ENCODE measurements at regions of chr5 and their contacts with region 1.

Region 1: DNA sequence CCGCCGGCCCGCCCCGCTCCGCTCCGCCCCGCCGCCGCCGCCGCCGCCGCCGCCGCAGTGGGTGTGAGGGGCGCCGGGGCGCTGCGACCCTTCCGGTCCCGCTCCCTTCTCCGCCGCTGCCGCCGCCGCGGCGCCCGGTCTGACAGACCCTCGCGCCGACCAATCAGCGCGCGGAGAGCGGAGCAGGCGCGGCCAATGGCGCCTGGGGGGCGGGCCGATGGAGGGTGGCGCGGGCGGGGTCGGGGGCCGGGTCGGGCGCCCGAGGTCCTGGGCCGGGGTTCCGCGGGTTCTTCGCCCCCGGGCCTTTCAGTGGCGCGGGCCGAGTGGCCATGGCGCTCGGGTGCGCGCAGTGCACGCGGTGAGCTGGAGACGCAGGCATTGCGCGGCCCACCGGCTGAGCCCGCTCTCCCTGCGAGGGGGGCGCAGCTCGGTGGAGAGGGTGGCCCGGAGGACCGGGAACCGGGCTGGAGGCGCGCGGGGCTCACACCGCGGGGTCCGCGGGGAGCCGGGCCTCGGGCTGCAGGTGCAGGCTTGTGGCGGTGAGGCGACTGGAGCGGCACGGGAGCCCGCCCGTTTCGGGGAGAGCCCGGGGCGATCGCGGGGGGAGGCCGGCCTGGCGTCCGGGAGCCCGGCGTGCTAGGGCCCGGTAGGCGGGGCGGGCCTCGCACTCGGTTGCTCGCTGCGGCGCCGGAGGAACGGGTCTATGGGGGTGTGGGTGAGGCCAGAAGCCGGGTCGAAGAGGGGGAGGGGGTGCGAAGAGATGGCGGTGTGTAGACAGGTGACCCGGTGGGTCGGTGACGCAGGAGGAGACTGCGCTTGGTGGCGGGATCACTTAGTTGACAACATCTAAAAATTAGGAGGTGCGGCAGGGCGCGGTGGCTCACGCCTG is at the start of gene MAPK9:
- DNase-seq: peak; percentile 62
- ATAC-seq: peak; percentile 83
- H3K4me3 ChIP-seq: peak within 1 kb of the TSS; percentile 85 to 94 (median 91)
- H3K27ac ChIP-seq: peak within 1 kb of the TSS; percentile 87
- H3K4me1 ChIP-seq: peaks cover 60% of the 10 kb centered on the region
- H3K27me3 ChIP-seq: no peaks in the 10 kb centered on the region
- CTCF ChIP-seq: peak; percentile 7; the same call in 1 of the 2 replicates
- EP300 ChIP-seq: no peak
- POLR2A ChIP-seq: peak; percentile 45 to 69; a peak in 3 of 4 replicates
- RAD21 ChIP-seq: peak; percentile 59; the same call in 1 of the 2 replicates
- total RNA-seq, gene MAPK9: 30.1 and 30.7 TPM in 2 replicates

Region 2: GRCh38 chr5:180209137-180209581 is 83.0 kb before region 1 on chr5 and contains the start of gene RASGEF1C:
- CTCF ChIA-PET with region 1: no interaction called
- POLR2A ChIA-PET with region 1: no interaction called
- in situ Hi-C with region 1: no loop called
- intact Hi-C with region 1: loop called (anchors 10 kb)
- DNase-seq: peak; percentile 16
- ATAC-seq: peak; percentile 86
- H3K4me3 ChIP-seq: peak within 1 kb of the TSS; percentile 21 to 61 (median 50); a peak in 4 of 6 replicates
- H3K27ac ChIP-seq: no peak within 1 kb of the TSS
- H3K4me1 ChIP-seq: peaks cover 11% of the 10 kb centered on the region
- H3K27me3 ChIP-seq: peaks cover 0 to 22% of the 10 kb centered on the region in 2 experiments; a peak in 3 of 5 replicates
- CTCF ChIP-seq: peak; percentile 48; the same call in 1 of the 2 replicates
- EP300 ChIP-seq: no peak
- POLR2A ChIP-seq: no peak
- RAD21 ChIP-seq: peak; percentile 79
- total RNA-seq, gene RASGEF1C: not detected in 2 replicates

Region 3: GRCh38 chr5:180304431-180305375 is 12.5 kb after region 1 on chr5:
- CTCF ChIA-PET with region 1: interaction called, 3 read pairs
- POLR2A ChIA-PET with region 1: interaction called, 11 read pairs
- in situ Hi-C with region 1: no loop called
- intact Hi-C with region 1: no loop called
- DNase-seq: no peak
- ATAC-seq: peak; percentile 39
- H3K4me3 ChIP-seq: peak overlapping the region in 1 of 3 experiments; percentile 22; a peak in 2 of 6 replicates
- H3K27ac ChIP-seq: no peak overlapping the region
- H3K4me1 ChIP-seq: peaks cover 53% of the 10 kb centered on the region
- H3K27me3 ChIP-seq: peaks cover 0 to 2% of the 10 kb centered on the region in 2 experiments; a peak in 2 of 5 replicates
- CTCF ChIP-seq: no peak
- EP300 ChIP-seq: no peak
- POLR2A ChIP-seq: no peak
- RAD21 ChIP-seq: no peak

Region 4: DNA sequence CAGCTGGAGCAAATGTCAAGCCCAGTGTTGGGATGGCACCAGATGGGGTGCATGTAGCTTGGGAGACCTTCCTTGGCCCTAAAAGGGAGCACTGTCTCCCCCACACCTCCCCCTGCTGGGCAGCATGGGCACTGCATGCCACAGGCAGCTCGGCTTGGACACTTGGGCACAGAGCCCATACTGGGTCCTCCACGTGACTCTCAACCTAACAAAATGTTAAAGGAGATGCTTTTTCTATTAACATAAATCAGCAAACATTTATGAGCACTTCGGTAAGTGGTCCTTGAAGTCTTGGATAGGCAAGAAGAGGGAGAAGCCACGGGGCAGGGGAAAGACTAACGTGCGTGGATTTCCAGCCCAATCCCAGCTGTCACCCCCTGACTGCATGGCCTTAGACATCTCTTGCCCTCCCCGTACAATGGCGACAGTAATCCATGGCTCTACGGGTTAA is 23.6 kb after region 1 on chr5:
- CTCF ChIA-PET with region 1: interaction called, 65 read pairs
- POLR2A ChIA-PET with region 1: interaction called, 12 read pairs
- in situ Hi-C with region 1: no loop called
- intact Hi-C with region 1: loop called (anchors 1 kb)
- DNase-seq: peak; percentile 38
- ATAC-seq: peak; percentile 73
- H3K4me3 ChIP-seq: no peak overlapping the region
- H3K27ac ChIP-seq: no peak overlapping the region
- H3K4me1 ChIP-seq: no peaks in the 10 kb centered on the region
- H3K27me3 ChIP-seq: peaks cover 0 to 5% of the 10 kb centered on the region in 2 experiments; a peak in 2 of 5 replicates
- CTCF ChIP-seq: peak; percentile 94
- EP300 ChIP-seq: no peak
- POLR2A ChIP-seq: no peak
- RAD21 ChIP-seq: peak; percentile 72

Region 5: GRCh38 chr5:180328296-180329137 is 36.3 kb after region 1 on chr5:
- CTCF ChIA-PET with region 1: interaction called, 26 read pairs
- POLR2A ChIA-PET with region 1: no interaction called
- in situ Hi-C with region 1: loop called (anchors 5 kb)
- intact Hi-C with region 1: loop called (anchors 1 kb)
- DNase-seq: peak; percentile 74
- ATAC-seq: peak; percentile 89
- H3K4me3 ChIP-seq: no peak overlapping the region
- H3K27ac ChIP-seq: no peak overlapping the region
- H3K4me1 ChIP-seq: 0 out of 2 replicates have a peak, but pooled peaks cover 8% of the 10 kb centered on the region
- H3K27me3 ChIP-seq: peaks cover 3 to 25% of the 10 kb centered on the region in 2 experiments; a peak in 4 of 5 replicates
- CTCF ChIP-seq: peak; percentile 91
- EP300 ChIP-seq: no peak
- POLR2A ChIP-seq: no peak
- RAD21 ChIP-seq: peak; percentile 61; the same call in 1 of the 2 replicates

Region 6: GRCh38 chr5:180470966-180471582 is 178.9 kb after region 1 on chr5:
- CTCF ChIA-PET with region 1: interaction called, 6 read pairs
- POLR2A ChIA-PET with region 1: no interaction called
- in situ Hi-C with region 1: loop called (anchors 10 kb)
- intact Hi-C with region 1: loop called (anchors 10 kb)
- DNase-seq: peak; percentile 25
- ATAC-seq: peak; percentile 77
- H3K4me3 ChIP-seq: no peak overlapping the region
- H3K27ac ChIP-seq: no peak overlapping the region
- H3K4me1 ChIP-seq: peaks cover 13% of the 10 kb centered on the region
- H3K27me3 ChIP-seq: peaks cover 3 to 31% of the 10 kb centered on the region in 2 experiments; a peak in 3 of 5 replicates
- CTCF ChIP-seq: peak; percentile 85
- EP300 ChIP-seq: no peak
- POLR2A ChIP-seq: no peak
- RAD21 ChIP-seq: peak; percentile 62

Measured in HepG2 (cell line).